Endothelial cell of umbilical vein (primary cell): ENCODE measurements at regions of chr4 and their contacts with region 1.

Region 1: GRCh38 chr4:12360391-12360790 is 931.7 kb upstream of the HS3ST1 start:
- DNase-seq: no peak
- H3K4me3 ChIP-seq: no peak overlapping the region
- H3K27ac ChIP-seq: no peak overlapping the region
- H3K4me1 ChIP-seq: no peaks in the 10 kb centered on the region
- H3K27me3 ChIP-seq: no peaks in the 10 kb centered on the region
- CTCF ChIP-seq: no peak
- POLR2A ChIP-seq: no peak

Region 2: GRCh38 chr4:12186526-12186925 is 173.9 kb before region 1 on chr4:
- CTCF ChIA-PET with region 1: no interaction called
- POLR2A ChIA-PET with region 1: no interaction called
- dilution Hi-C with region 1: no loop called
- intact Hi-C with region 1: loop called (anchors 5 kb)
- DNase-seq: no peak
- H3K4me3 ChIP-seq: no peak overlapping the region
- H3K27ac ChIP-seq: no peak overlapping the region
- H3K4me1 ChIP-seq: no peaks in the 10 kb centered on the region
- H3K27me3 ChIP-seq: no peaks in the 10 kb centered on the region
- CTCF ChIP-seq: no peak
- POLR2A ChIP-seq: no peak